GM12878 (cell line): ENCODE measurements at regions of chr14 and their contacts with region 1.

Region 1: GRCh38 chr14:69090187-69090789 is 62.6 kb downstream of the DCAF5 start:
- DNase-seq: no peak
- ATAC-seq: peak; percentile 82
- H3K4me3 ChIP-seq: no peak overlapping the region
- H3K27ac ChIP-seq: no peak overlapping the region
- H3K4me1 ChIP-seq: peaks cover 4% of the 10 kb centered on the region
- H3K27me3 ChIP-seq: no peaks in the 10 kb centered on the region
- CTCF ChIP-seq: peak; percentile 50 to 65 (median 56)
- EP300 ChIP-seq: no peak
- POLR2A ChIP-seq: no peak
- RAD21 ChIP-seq: peak; percentile 58

Region 2: GRCh38 chr14:68862954-68863594 is 227.2 kb before region 1 on chr14:
- CTCF ChIA-PET with region 1: interaction called, 16 read pairs
- POLR2A ChIA-PET with region 1: no interaction called
- RAD21 ChIA-PET with region 1: no interaction called
- SMC1A ChIA-PET with region 1: no interaction called
- in situ Hi-C with region 1: no loop called
- intact Hi-C with region 1: no loop called
- DNase-seq: peak; percentile 32
- ATAC-seq: peak; percentile 90
- H3K4me3 ChIP-seq: no peak overlapping the region
- H3K27ac ChIP-seq: no peak overlapping the region
- H3K4me1 ChIP-seq: no peaks in the 10 kb centered on the region; the same call in 1 of the 2 replicates
- H3K27me3 ChIP-seq: no peaks in the 10 kb centered on the region
- CTCF ChIP-seq: peak; percentile 69 to 78 (median 75)
- EP300 ChIP-seq: no peak
- POLR2A ChIP-seq: no peak
- RAD21 ChIP-seq: peak; percentile 80

Region 3: DNA sequence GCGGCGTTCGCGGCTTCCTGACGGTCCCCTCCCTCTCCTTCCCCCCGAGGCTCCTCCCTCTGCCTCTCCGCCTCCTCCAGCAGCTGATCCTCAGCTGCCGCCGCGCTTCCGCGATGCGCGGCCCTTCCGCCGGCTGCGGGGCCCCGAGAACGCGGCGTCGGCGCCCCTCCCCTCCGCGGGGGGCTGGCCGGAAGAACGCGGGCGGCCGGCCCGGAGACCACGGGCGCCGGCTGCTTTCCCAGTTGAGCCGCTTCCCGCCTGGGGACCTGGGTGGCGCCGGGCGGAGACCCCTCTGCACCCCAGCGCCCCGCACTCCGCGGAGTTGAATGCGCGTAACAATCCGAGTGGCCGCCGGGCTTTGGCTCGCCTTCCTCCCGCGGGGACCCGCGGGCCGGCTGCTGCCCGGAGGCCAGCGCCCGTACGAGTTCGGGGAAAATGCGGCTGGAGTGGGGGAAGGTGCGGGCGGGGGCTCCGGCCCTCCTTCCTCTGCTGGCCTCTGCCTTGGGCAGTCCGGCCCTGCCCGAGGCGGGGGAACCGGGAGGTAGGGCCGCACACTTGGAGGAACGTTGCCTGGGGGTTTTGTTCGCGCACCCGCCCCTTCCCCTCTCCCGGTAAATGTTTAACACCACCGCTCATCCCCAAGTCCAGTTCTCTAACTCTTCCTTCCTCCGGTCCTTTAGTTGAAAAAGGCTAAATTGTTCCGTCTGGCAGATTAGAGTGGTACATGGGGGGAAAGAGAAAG is 63.0 kb after region 1 on chr14:
- CTCF ChIA-PET with region 1: no interaction called
- POLR2A ChIA-PET with region 1: no interaction called
- RAD21 ChIA-PET with region 1: no interaction called
- SMC1A ChIA-PET with region 1: no interaction called
- in situ Hi-C with region 1: no loop called
- intact Hi-C with region 1: no loop called
- DNase-seq: peak; percentile 71
- ATAC-seq: peak; percentile 93
- H3K4me3 ChIP-seq: peak overlapping the region; percentile 96
- H3K27ac ChIP-seq: peak overlapping the region; percentile 48; the same call in 1 of the 2 replicates
- H3K4me1 ChIP-seq: peaks cover 8% of the 10 kb centered on the region; the same call in 1 of the 2 replicates
- H3K27me3 ChIP-seq: peaks cover 1 to 5% of the 10 kb centered on the region in 2 experiments; a peak in 1 of 4 replicates
- CTCF ChIP-seq: no peak
- EP300 ChIP-seq: no peak
- POLR2A ChIP-seq: peak; percentile 86
- RAD21 ChIP-seq: no peak